GM12878 (cell line): ENCODE measurements at regions of chr10 and their contacts with region 1.

Region 1: DNA sequence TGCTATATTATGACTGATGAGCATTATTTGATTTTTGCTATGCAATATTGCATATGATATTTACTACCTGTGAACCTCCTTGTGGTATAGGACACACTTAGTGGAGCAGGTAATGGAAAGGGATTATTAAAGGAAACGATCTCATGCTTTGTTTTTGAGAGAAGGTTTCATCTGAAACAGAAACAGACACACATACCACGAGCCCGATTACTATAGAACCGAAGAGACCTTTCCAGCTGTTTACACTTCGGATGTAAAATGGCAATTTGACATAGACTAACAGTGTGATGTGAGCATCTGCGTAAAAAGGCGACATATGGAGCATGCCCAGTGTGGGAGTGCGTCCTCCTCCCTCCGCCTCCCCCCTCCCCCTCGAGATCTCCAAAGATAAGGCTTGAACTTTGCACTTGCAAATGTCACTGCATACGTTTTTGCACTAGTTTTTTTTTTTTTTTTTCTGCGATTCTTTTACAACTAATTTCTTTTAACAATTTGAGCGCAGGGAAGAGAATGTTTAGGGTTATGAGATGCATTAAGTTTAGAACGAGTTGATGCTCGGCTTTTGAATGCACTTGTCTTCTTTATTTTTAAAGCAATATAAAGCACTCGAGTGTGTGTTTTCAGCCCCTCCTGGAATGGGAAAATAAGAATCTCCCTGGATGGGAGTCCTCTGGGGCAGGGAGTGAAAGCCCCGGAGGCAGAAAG is 251.0 kb downstream of the NSUN6 start:
- DNase-seq: peak; percentile 54
- ATAC-seq: peak; percentile 75
- H3K4me3 ChIP-seq: no peak overlapping the region
- H3K27ac ChIP-seq: no peak overlapping the region
- H3K4me1 ChIP-seq: no peaks in the 10 kb centered on the region
- H3K27me3 ChIP-seq: no peaks in the 10 kb centered on the region
- CTCF ChIP-seq: no peak
- EP300 ChIP-seq: peak; percentile 90 to 94; a peak in 3 of 4 replicates
- POLR2A ChIP-seq: no peak
- RAD21 ChIP-seq: no peak

Region 2: GRCh38 chr10:18368682-18369081 is 31.7 kb before region 1 on chr10:
- CTCF ChIA-PET with region 1: interaction called, 3 read pairs
- POLR2A ChIA-PET with region 1: interaction called, 3 read pairs
- RAD21 ChIA-PET with region 1: interaction called, 14 read pairs
- SMC1A ChIA-PET with region 1: interaction called, 8 read pairs
- in situ Hi-C with region 1: no loop called
- intact Hi-C with region 1: no loop called
- DNase-seq: no peak
- ATAC-seq: peak; percentile 41; the same call in 2 of the 3 replicates
- H3K4me3 ChIP-seq: no peak overlapping the region
- H3K27ac ChIP-seq: no peak overlapping the region
- H3K4me1 ChIP-seq: no peaks in the 10 kb centered on the region
- H3K27me3 ChIP-seq: no peaks in the 10 kb centered on the region
- CTCF ChIP-seq: no peak
- EP300 ChIP-seq: no peak
- POLR2A ChIP-seq: no peak
- RAD21 ChIP-seq: no peak

Region 3: GRCh38 chr10:18424200-18424599 is 23.8 kb after region 1 on chr10:
- CTCF ChIA-PET with region 1: interaction called, 16 read pairs
- POLR2A ChIA-PET with region 1: interaction called, 63 read pairs
- RAD21 ChIA-PET with region 1: interaction called, 103 read pairs
- SMC1A ChIA-PET with region 1: interaction called, 163 read pairs
- in situ Hi-C with region 1: no loop called
- intact Hi-C with region 1: loop called (anchors 1 kb)
- DNase-seq: no peak
- ATAC-seq: peak; percentile 81
- H3K4me3 ChIP-seq: no peak overlapping the region
- H3K27ac ChIP-seq: no peak overlapping the region
- H3K4me1 ChIP-seq: no peaks in the 10 kb centered on the region
- H3K27me3 ChIP-seq: no peaks in the 10 kb centered on the region
- CTCF ChIP-seq: no peak
- EP300 ChIP-seq: peak; percentile 37 to 63; a peak in 2 of 4 replicates
- POLR2A ChIP-seq: no peak
- RAD21 ChIP-seq: no peak

Region 4: DNA sequence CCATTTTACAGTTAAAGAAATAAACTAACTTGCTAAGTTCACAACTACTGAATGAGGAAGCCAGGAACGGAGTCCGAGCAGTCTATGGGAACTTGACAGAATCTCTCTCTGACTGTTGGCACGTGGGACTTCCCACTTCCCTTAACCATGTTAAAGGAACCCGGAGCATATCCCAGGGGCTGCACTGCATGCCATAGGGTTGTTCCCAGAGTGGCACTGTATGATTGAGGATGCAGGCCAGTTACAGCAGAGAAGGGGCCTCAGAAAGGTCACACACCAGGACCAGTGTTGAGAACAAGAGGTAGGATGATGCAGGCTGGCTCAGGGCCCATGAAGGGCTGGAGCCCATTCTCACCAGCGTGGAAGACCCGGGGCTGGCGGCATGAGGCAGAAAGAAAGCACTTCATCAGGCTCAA is 49.3 kb after region 1 on chr10:
- CTCF ChIA-PET with region 1: interaction called, 4 read pairs
- POLR2A ChIA-PET with region 1: interaction called, 5 read pairs
- RAD21 ChIA-PET with region 1: interaction called, 21 read pairs
- SMC1A ChIA-PET with region 1: interaction called, 34 read pairs
- in situ Hi-C with region 1: no loop called
- intact Hi-C with region 1: no loop called
- DNase-seq: no peak
- ATAC-seq: peak; percentile 51
- H3K4me3 ChIP-seq: no peak overlapping the region
- H3K27ac ChIP-seq: no peak overlapping the region
- H3K4me1 ChIP-seq: no peaks in the 10 kb centered on the region
- H3K27me3 ChIP-seq: no peaks in the 10 kb centered on the region
- CTCF ChIP-seq: no peak
- EP300 ChIP-seq: no peak
- POLR2A ChIP-seq: no peak
- RAD21 ChIP-seq: no peak

Region 5: DNA sequence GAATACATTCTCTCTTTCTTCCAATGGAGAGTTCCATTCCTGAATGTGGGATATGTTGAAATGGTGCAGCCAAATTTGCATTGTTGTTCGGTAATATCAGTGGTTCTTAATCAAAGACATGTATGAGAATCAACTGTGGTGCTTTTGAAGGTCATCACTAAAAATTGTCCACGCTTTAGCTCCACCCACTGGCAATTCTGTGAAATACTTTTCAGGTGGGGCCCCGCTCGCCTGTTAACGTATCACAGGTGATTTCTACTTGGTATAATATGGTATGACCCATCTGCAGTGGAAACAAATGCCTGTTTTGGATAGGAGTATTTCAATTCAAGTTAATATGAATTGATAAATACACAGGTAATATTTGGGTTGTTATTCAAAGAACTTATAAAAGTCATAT is 72.6 kb after region 1 on chr10:
- CTCF ChIA-PET with region 1: interaction called, 48 read pairs
- POLR2A ChIA-PET with region 1: interaction called, 8 read pairs
- RAD21 ChIA-PET with region 1: interaction called, 29 read pairs
- SMC1A ChIA-PET with region 1: interaction called, 68 read pairs
- in situ Hi-C with region 1: no loop called
- intact Hi-C with region 1: loop called (anchors 5 kb)
- DNase-seq: no peak
- ATAC-seq: peak; percentile 70
- H3K4me3 ChIP-seq: no peak overlapping the region
- H3K27ac ChIP-seq: no peak overlapping the region
- H3K4me1 ChIP-seq: no peaks in the 10 kb centered on the region
- H3K27me3 ChIP-seq: no peaks in the 10 kb centered on the region
- CTCF ChIP-seq: peak; percentile 21 to 43 (median 32); a peak in 4 of 6 replicates
- EP300 ChIP-seq: no peak
- POLR2A ChIP-seq: no peak
- RAD21 ChIP-seq: no peak

Region 6: GRCh38 chr10:18659120-18659818 is 258.9 kb after region 1 on chr10 and contains the start of gene ARL5B:
- CTCF ChIA-PET with region 1: no interaction called
- POLR2A ChIA-PET with region 1: interaction called, 5 read pairs
- RAD21 ChIA-PET with region 1: interaction called, 5 read pairs
- SMC1A ChIA-PET with region 1: interaction called, 4 read pairs
- in situ Hi-C with region 1: no loop called
- intact Hi-C with region 1: loop called (anchors 2 kb)
- DNase-seq: peak; percentile 92
- ATAC-seq: peak; percentile 91
- H3K4me3 ChIP-seq: peak within 1 kb of the TSS; percentile 92
- H3K27ac ChIP-seq: peak within 1 kb of the TSS; percentile 100
- H3K4me1 ChIP-seq: peaks cover 3% of the 10 kb centered on the region; the same call in 1 of the 2 replicates
- H3K27me3 ChIP-seq: no peaks in the 10 kb centered on the region
- CTCF ChIP-seq: no peak
- EP300 ChIP-seq: peak; percentile 89 to 95
- POLR2A ChIP-seq: peak; percentile 90
- RAD21 ChIP-seq: no peak
- polyA plus RNA-seq, gene ARL5B: 2.5 to 2.6 TPM